T-cell (primary cell): ENCODE measurements at regions of chr18 and their contacts with region 1.

Region 1: DNA sequence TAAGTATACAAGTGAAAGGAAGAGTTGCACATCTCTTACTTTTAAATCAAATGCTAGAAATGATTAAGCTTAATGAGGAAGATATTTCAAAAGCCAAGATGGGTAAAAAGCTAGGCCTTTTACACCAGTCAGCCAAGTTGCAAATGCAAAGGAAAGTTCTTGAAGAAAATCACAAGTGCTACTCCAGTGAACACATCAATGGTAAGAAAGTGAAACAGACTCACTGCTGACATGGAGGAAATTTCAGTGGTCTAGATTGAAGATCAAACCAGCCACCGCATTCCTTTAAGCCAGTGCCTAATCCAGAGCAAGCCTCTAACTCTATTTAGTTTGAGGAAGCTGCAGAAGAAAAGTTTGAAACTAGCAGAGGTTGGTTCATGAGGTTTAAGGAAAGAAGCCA is 79.1 kb downstream of the RBBP8 start:
- DNase-seq: no peak
- ATAC-seq: peak in 1 of 4 experiments; percentile 63
- H3K4me3 ChIP-seq: no peak overlapping the region
- H3K4me3 Mint-ChIP-seq: no peak overlapping the region
- H3K27ac ChIP-seq: no peak overlapping the region
- H3K27ac Mint-ChIP-seq: peak overlapping the region in 1 of 2 donors; percentile 48
- H3K4me1 ChIP-seq: no peaks in the 10 kb centered on the region
- H3K4me1 Mint-ChIP-seq: peaks cover 7 to 13% (median 10%) of the 10 kb centered on the region in 3 donors
- H3K27me3 ChIP-seq: no peaks in the 10 kb centered on the region
- H3K27me3 Mint-ChIP-seq: no peaks in the 10 kb centered on the region

Region 2: DNA sequence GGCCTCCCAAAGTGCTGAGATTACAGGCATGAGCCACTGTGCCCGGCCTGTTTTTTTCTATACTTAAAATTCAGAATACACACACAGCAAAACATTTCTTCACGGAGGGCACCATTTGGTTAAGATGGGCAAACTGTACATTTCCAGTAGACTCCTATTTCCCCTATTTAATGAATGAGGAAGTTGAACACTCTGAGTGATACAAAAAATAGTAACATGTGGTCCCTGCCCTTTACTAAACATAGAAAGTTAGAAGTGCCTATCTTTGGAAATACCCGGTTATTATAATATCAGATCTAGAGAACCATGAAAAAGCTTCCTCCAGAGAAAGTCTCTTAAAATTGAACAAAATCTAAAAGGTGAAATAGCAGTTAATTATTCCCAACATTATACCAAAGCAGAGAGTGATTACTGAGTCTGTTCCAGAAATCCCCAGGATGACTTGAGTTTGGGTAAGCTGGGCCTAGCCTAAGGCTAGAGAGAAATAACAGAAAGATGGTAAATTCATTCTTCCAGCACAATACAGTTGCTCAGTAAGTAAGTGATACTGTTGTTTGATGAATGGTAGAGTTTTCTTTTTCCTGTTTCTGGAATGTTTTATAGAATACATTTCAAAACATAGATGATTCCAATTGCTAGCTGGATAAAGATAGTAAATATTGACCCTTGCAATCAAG is 467.7 kb after region 1 on chr18:
- CTCF ChIA-PET with region 1: interaction called in 1 of 2 experiments, 13 read pairs
- POLR2A ChIA-PET with region 1: no interaction called
- DNase-seq: no peak
- ATAC-seq: no peak
- H3K4me3 ChIP-seq: no peak overlapping the region
- H3K4me3 Mint-ChIP-seq: no peak overlapping the region
- H3K27ac ChIP-seq: no peak overlapping the region
- H3K27ac Mint-ChIP-seq: no peak overlapping the region
- H3K4me1 ChIP-seq: no peaks in the 10 kb centered on the region
- H3K4me1 Mint-ChIP-seq: peaks cover 0 to 2% (median 0%) of the 10 kb centered on the region in 3 donors
- H3K27me3 ChIP-seq: no peaks in the 10 kb centered on the region
- H3K27me3 Mint-ChIP-seq: no peaks in the 10 kb centered on the region

Region 3: GRCh38 chr18:24200494-24201290 is 1188.4 kb after region 1 on chr18:
- CTCF ChIA-PET with region 1: interaction called in 1 of 2 experiments, 11 read pairs
- POLR2A ChIA-PET with region 1: no interaction called
- DNase-seq: no peak
- ATAC-seq: no peak
- H3K4me3 ChIP-seq: no peak overlapping the region
- H3K4me3 Mint-ChIP-seq: no peak overlapping the region
- H3K27ac ChIP-seq: no peak overlapping the region
- H3K27ac Mint-ChIP-seq: no peak overlapping the region
- H3K4me1 ChIP-seq: no peaks in the 10 kb centered on the region
- H3K4me1 Mint-ChIP-seq: no peaks in the 10 kb centered on the region
- H3K27me3 ChIP-seq: peaks cover 0 to 4% of the 10 kb centered on the region in 2 experiments
- H3K27me3 Mint-ChIP-seq: no peaks in the 10 kb centered on the region